Sigmoid colon (tissue), 7 donors: ENCODE measurements at regions of chr14 and their contacts with region 1.

Region 1: GRCh38 chr14:65164068-65164824 is 61.9 kb upstream of the MAX start:
- DNase-seq: no peak
- H3K4me3 ChIP-seq: no peak overlapping the region
- H3K27ac ChIP-seq: no peak overlapping the region
- H3K4me1 ChIP-seq: no peaks in the 10 kb centered on the region
- H3K27me3 ChIP-seq: no peaks in the 10 kb centered on the region
- CTCF ChIP-seq: peak; percentile 23 to 62 (median 38)
- EP300 ChIP-seq: no peak
- POLR2A ChIP-seq: no peak

Region 2: GRCh38 chr14:65604936-65605335 is 440.7 kb after region 1 on chr14:
- intact Hi-C with region 1: loop called (anchors 10 kb)
- DNase-seq: no peak
- H3K4me3 ChIP-seq: no peak overlapping the region
- H3K27ac ChIP-seq: no peak overlapping the region
- H3K4me1 ChIP-seq: no peaks in the 10 kb centered on the region
- H3K27me3 ChIP-seq: no peaks in the 10 kb centered on the region
- CTCF ChIP-seq: no peak
- EP300 ChIP-seq: no peak
- POLR2A ChIP-seq: no peak

Region 3: GRCh38 chr14:65824285-65824977 is 660.2 kb after region 1 on chr14:
- intact Hi-C with region 1: loop called (anchors 2 kb)
- DNase-seq: no peak
- H3K4me3 ChIP-seq: no peak overlapping the region
- H3K27ac ChIP-seq: no peak overlapping the region
- H3K4me1 ChIP-seq: no peaks in the 10 kb centered on the region
- H3K27me3 ChIP-seq: peaks cover 0 to 5% (median 0%) of the 10 kb centered on the region in 3 donors
- CTCF ChIP-seq: peak; percentile 77 to 92 (median 87)
- EP300 ChIP-seq: no peak
- POLR2A ChIP-seq: no peak

Region 4: DNA sequence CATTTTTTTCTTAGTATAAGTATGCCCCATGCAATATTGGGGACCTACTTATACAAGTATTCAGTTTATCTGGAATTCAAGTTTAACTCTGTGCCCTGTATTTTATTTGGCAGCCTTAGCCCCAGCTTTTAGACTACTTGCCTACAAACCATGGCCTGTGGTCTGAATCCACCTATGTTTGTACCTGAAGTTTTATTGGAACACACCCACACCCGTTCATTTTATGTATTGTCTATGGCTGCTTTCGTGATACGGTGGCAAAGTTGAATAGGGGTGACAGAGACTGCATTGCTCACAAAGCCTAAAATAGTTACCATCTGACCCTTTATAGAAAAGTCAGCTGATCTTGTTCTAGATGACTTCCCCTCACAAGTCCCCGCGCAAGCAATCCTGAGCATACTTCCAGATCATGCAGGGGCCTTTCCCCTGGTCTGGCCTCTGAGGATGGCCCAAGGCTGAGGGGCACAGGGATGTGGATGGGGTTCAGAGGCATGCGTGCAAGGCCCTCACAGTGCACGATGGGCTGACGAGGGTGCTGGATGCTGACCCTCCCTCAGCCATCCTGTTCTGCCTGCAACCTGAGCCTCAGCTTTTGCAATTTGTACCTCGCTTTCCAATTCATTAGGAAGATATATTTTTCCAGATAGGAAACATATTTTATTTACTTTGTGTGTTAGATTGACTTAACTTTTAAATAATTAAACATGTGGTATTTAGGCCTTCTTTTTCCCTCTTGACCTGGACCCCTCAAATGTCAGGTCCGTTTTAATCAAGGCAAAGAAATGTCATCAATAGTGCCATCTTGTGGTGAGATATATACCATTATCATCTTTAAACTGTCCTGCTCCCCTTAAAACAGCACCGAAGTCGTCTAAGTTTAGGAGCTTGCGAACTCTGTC is 794.7 kb after region 1 on chr14:
- intact Hi-C with region 1: loop called (anchors 2 kb)
- DNase-seq: no peak
- H3K4me3 ChIP-seq: no peak overlapping the region
- H3K27ac ChIP-seq: no peak overlapping the region
- H3K4me1 ChIP-seq: no peaks in the 10 kb centered on the region
- H3K27me3 ChIP-seq: peaks cover 0 to 7% (median 0%) of the 10 kb centered on the region in 3 donors
- CTCF ChIP-seq: peak in 2 of 4 experiments; percentile 30 to 44
- EP300 ChIP-seq: no peak
- POLR2A ChIP-seq: no peak